Activated T-helper 1 cell treated with anti-CD3 and anti-CD28 coated beads, Interleukin-12 subunit alpha, Interleukin-12 subunit beta, Interleukin-2, Interleukin-4 antibody, amounts not matched to agents 30 ng/mL and 10 ng/mL and 1 ng/mL, durations not matched to agents 14 hours and 24 hours and 36 hours (primary cell): ENCODE measurements at regions of chr1 and their contacts with region 1.

Region 1: GRCh38 chr1:211258756-211259637 is at the start of gene RCOR3:
- DNase-seq: peak; percentile 85
- H3K4me3 Mint-ChIP-seq: peak within 1 kb of the TSS; percentile 90
- H3K27ac Mint-ChIP-seq: peak within 1 kb of the TSS; percentile 90
- H3K4me1 Mint-ChIP-seq: peaks cover 20% of the 10 kb centered on the region
- H3K27me3 Mint-ChIP-seq: peaks cover 4% of the 10 kb centered on the region
- total RNA-seq, gene RCOR3: 40.5 and 41.0 TPM in 2 replicates

Region 2: GRCh38 chr1:210373885-210374599 is 885.0 kb before region 1 on chr1:
- intact Hi-C with region 1: loop called (anchors 1 kb)
- DNase-seq: peak; percentile 57
- H3K4me3 Mint-ChIP-seq: no peak overlapping the region
- H3K27ac Mint-ChIP-seq: peak overlapping the region; percentile 62
- H3K4me1 Mint-ChIP-seq: peaks cover 19% of the 10 kb centered on the region
- H3K27me3 Mint-ChIP-seq: peaks cover 5% of the 10 kb centered on the region

Region 3: GRCh38 chr1:211229365-211229759 is 29.6 kb before region 1 on chr1:
- intact Hi-C with region 1: loop called (anchors 1 kb)
- DNase-seq: no peak
- H3K4me3 Mint-ChIP-seq: peak overlapping the region; percentile 51
- H3K27ac Mint-ChIP-seq: peak overlapping the region; percentile 63
- H3K4me1 Mint-ChIP-seq: peaks cover 26% of the 10 kb centered on the region
- H3K27me3 Mint-ChIP-seq: peaks cover 3% of the 10 kb centered on the region

Region 4: GRCh38 chr1:211382714-211383480 is 123.9 kb after region 1 on chr1:
- intact Hi-C with region 1: loop called (anchors 1 kb)
- DNase-seq: peak; percentile 77
- H3K4me3 Mint-ChIP-seq: peak overlapping the region; percentile 91
- H3K27ac Mint-ChIP-seq: peak overlapping the region; percentile 89
- H3K4me1 Mint-ChIP-seq: peaks cover 51% of the 10 kb centered on the region
- H3K27me3 Mint-ChIP-seq: peaks cover 8% of the 10 kb centered on the region

Region 5: GRCh38 chr1:211514030-211514754 is 255.2 kb after region 1 on chr1:
- intact Hi-C with region 1: loop called (anchors 1 kb)
- DNase-seq: peak; percentile 58
- H3K4me3 Mint-ChIP-seq: peak overlapping the region; percentile 66
- H3K27ac Mint-ChIP-seq: peak overlapping the region; percentile 55
- H3K4me1 Mint-ChIP-seq: peaks cover 27% of the 10 kb centered on the region
- H3K27me3 Mint-ChIP-seq: peaks cover 13% of the 10 kb centered on the region

Region 6: GRCh38 chr1:211735208-211736170 is 476.5 kb after region 1 on chr1:
- intact Hi-C with region 1: no loop called
- DNase-seq: no peak
- H3K4me3 Mint-ChIP-seq: no peak overlapping the region
- H3K27ac Mint-ChIP-seq: no peak overlapping the region
- H3K4me1 Mint-ChIP-seq: peaks cover 25% of the 10 kb centered on the region
- H3K27me3 Mint-ChIP-seq: peaks cover 4% of the 10 kb centered on the region

Region 7: DNA sequence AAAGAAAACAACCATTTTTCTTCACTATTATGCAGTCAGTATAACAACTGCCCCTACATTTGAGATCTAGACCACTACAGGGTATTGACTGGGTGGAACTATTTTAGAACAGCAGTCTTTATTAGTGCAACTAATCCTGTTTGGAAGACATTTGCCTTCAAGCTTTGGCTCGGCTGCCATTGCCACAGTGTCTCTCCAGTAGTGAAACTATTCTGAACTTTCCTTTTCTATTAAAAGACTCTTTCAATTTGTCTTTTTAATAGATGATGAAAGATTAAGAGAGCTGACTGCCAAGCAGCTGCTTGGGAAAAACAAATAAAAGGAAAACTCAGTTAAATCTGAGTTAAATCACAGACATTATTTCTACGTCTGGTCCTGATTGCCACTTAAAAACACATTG is 522.3 kb after region 1 on chr1:
- intact Hi-C with region 1: no loop called
- DNase-seq: no peak
- H3K4me3 Mint-ChIP-seq: no peak overlapping the region
- H3K27ac Mint-ChIP-seq: no peak overlapping the region
- H3K4me1 Mint-ChIP-seq: peaks cover 7% of the 10 kb centered on the region
- H3K27me3 Mint-ChIP-seq: no peaks in the 10 kb centered on the region

Region 8: GRCh38 chr1:212110617-212111016 is 851.6 kb after region 1 on chr1:
- intact Hi-C with region 1: no loop called
- DNase-seq: no peak
- H3K4me3 Mint-ChIP-seq: no peak overlapping the region
- H3K27ac Mint-ChIP-seq: no peak overlapping the region
- H3K4me1 Mint-ChIP-seq: peaks cover under 1% of the 10 kb centered on the region
- H3K27me3 Mint-ChIP-seq: no peaks in the 10 kb centered on the region